Activated T-helper 1 cell treated with anti-CD3 and anti-CD28 coated beads, Interleukin-12 subunit alpha, Interleukin-12 subunit beta, Interleukin-2, Interleukin-4 antibody, amounts not matched to agents 30 ng/mL and 10 ng/mL and 1 ng/mL, durations not matched to agents 14 hours and 24 hours and 36 hours (primary cell): ENCODE measurements at regions of chr10 and their contacts with region 1.

Region 1: DNA sequence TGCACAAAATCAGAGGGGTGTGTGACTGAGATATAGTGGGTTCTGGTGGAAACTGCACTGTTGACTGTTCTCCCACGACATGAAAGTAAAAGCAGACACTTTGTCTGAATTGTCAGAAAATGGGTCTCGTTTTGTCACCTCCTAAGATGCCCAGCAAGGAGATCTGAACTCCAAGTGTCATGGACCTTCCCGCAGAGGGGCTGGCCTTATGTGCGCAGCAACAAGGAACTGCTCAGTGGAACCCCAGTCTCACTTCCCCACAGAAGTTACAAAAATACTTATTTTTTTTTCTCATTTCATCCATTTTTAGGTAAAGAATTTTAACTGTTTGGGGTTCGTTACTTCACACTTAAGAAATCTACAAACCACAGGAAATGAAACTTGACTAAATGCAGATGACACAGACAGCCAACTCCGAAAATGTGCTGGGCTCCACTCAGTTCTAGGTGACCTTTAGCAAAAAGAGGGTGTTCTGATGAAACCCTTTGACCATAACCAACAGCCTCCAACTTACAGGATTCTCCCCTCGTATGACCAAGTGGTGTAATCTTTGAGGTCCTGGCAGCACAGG is 115.0 kb downstream of the FAM107B start:
- DNase-seq: peak; percentile 59
- H3K4me3 Mint-ChIP-seq: peak overlapping the region; percentile 46
- H3K27ac Mint-ChIP-seq: peak overlapping the region; percentile 92
- H3K4me1 Mint-ChIP-seq: peaks cover 81% of the 10 kb centered on the region
- H3K27me3 Mint-ChIP-seq: no peaks in the 10 kb centered on the region

Region 2: DNA sequence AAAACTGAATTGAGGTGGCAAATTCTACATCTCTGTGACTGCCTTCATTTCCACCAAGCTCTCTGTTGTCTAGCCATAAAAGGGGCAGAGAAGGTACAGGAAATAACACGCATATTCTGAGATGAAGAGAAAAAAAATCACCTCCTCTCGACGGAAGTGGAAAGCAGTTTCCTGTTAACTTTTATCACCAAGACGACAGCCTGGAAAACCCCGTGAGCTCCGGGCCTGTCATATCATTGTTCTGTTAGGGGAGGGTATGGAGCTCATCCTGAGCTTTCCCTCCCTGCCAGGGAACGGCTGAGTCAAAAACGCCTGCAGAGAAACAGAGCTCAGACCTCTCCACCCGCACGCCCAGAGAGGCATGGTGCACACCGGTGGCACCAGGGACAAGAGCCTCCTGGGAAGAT is 872.7 kb before region 1 on chr10:
- intact Hi-C with region 1: loop called (anchors 10 kb)
- DNase-seq: peak; percentile 79
- H3K4me3 Mint-ChIP-seq: peak overlapping the region; percentile 68
- H3K27ac Mint-ChIP-seq: peak overlapping the region; percentile 95
- H3K4me1 Mint-ChIP-seq: peaks cover 7% of the 10 kb centered on the region
- H3K27me3 Mint-ChIP-seq: peaks cover 2% of the 10 kb centered on the region

Region 3: GRCh38 chr10:14389978-14390590 is 269.6 kb before region 1 on chr10:
- intact Hi-C with region 1: loop called (anchors 1 kb)
- DNase-seq: peak; percentile 14
- H3K4me3 Mint-ChIP-seq: no peak overlapping the region
- H3K27ac Mint-ChIP-seq: peak overlapping the region; percentile 58
- H3K4me1 Mint-ChIP-seq: peaks cover 33% of the 10 kb centered on the region
- H3K27me3 Mint-ChIP-seq: peaks cover 43% of the 10 kb centered on the region

Region 4: DNA sequence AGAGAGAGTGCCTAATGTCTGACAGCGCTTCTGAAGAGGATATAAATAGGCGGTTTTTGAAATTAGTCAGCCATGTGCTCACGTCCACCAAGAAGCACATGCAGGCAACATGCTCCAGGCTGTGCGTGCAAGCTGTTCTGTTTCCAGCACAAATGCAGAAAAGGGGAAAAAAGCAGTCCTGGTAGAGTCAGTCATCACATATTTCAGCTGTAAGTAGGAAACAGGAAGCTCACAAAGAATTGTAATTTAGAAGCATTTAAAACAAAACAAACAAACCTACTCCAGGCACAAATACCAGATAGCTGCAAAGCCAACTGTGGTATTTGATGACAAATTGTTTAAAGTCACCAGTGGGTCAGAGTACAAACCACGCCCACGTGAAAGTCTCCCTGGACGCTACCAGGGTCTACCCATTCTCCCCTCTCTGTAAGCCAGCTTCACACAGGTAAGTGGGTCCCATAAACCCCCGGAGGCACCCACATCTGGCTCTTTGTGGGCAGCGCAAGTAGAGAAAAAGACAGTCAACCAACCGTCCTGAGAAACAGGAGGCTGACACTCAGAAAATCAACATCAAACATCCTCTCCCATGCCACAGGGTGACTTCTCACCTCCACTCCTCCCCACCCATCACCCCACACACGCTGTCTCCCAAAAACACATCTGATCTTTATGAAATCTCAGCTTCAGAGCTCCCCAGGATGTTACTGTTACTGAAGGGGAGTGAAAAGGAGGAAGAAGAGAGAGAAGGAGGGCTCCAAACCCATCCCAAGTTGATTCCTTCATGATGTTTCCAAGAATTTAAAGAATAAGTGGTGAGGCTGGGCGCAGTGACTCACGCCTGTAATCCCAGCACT is 71.4 kb before region 1 on chr10:
- intact Hi-C with region 1: loop called (anchors 1 kb)
- DNase-seq: peak; percentile 52
- H3K4me3 Mint-ChIP-seq: peak overlapping the region; percentile 74
- H3K27ac Mint-ChIP-seq: peak overlapping the region; percentile 97
- H3K4me1 Mint-ChIP-seq: peaks cover 94% of the 10 kb centered on the region
- H3K27me3 Mint-ChIP-seq: no peaks in the 10 kb centered on the region

Region 5: DNA sequence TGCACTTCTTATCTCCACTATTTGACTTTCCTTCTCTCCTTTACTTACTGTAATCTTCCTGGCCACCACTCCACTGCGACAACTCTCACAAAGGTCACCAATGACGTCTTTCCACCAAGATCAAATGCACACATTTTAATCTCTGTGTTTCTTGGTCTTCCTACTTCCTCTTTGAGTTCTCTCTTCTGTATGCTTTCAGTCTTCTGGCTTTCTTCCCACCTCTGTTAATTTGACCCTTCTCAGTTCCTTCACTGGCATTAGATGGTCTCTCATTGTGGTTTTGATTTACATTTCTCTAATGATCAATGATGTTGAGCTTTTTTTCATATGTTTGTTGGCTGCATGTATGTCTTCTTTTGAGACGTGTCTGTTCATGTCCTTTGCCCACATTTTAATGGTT is 83.1 kb after region 1 on chr10:
- intact Hi-C with region 1: loop called (anchors 2 kb)
- DNase-seq: no peak
- H3K4me3 Mint-ChIP-seq: peak overlapping the region; percentile 27
- H3K27ac Mint-ChIP-seq: peak overlapping the region; percentile 69
- H3K4me1 Mint-ChIP-seq: peaks cover 34% of the 10 kb centered on the region
- H3K27me3 Mint-ChIP-seq: no peaks in the 10 kb centered on the region